ENCODE measurements at regions of chr17 and their contacts with region 1.

Region 1: GRCh38 chr17:68457539-68458259 is 403 bp upstream of the WIPI1 start:
- DNase-seq: peak; percentile 98
- ATAC-seq: peak; percentile 95
- H3K4me3 Mint-ChIP-seq: peak overlapping the region; percentile 77
- H3K27ac Mint-ChIP-seq: peak overlapping the region; percentile 88
- H3K4me1 Mint-ChIP-seq: peaks cover 82% of the 10 kb centered on the region
- H3K27me3 Mint-ChIP-seq: no peaks in the 10 kb centered on the region

Region 2: GRCh38 chr17:68172461-68172954 is 285.2 kb before region 1 on chr17:
- CTCF ChIA-PET with region 1: interaction called, 12 read pairs
- POLR2A ChIA-PET with region 1: no interaction called
- DNase-seq: peak; percentile 83
- ATAC-seq: peak; percentile 52
- H3K4me3 Mint-ChIP-seq: no peak overlapping the region
- H3K27ac Mint-ChIP-seq: no peak overlapping the region
- H3K4me1 Mint-ChIP-seq: peaks cover 42% of the 10 kb centered on the region
- H3K27me3 Mint-ChIP-seq: no peaks in the 10 kb centered on the region

Region 3: GRCh38 chr17:68184816-68185436 is 272.8 kb before region 1 on chr17:
- CTCF ChIA-PET with region 1: interaction called, 10 read pairs
- POLR2A ChIA-PET with region 1: interaction called, 4 read pairs
- DNase-seq: peak; percentile 78
- ATAC-seq: peak; percentile 76
- H3K4me3 Mint-ChIP-seq: peak overlapping the region; percentile 54
- H3K27ac Mint-ChIP-seq: peak overlapping the region; percentile 81
- H3K4me1 Mint-ChIP-seq: peaks cover 56% of the 10 kb centered on the region
- H3K27me3 Mint-ChIP-seq: peaks cover 2% of the 10 kb centered on the region

Region 4: DNA sequence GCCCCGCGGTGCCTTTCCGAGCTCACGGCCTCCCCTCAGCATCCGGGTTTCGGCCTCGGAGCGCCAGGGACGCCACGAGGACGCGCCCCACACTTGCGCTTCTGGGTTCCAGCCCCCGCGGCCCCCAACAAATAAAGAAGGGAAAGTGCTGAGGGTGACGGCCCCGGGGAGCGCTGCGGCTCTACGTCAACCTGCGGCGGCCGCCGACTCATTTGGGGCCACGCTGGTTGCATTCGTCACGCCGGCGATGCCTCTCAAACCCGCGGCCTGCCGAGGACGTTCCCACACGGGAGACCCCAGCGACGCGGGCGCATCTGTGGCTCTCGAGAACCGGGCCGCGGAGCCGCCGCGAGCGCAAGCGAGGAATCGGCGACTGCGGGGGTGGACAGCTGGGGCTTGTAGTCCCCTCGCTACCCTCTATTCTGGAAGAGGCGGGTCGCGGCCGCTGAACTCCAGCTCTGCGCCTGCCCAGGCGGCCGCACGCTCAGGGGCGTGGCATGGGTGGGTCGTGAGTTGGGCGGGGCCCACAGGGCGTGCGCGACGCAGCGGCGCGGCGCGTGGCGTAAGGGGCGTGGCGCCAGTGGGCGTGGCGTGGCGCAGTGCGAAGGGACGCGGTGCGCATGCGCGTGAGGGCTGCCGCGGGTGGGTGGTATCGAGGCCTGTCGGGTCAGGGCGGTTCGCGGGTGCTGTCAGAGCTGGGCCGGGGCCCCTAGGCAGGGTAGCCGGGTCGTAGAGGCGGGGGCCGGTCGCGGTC is 210.1 kb before region 1 on chr17 and contains the start of gene AMZ2:
- CTCF ChIA-PET with region 1: interaction called, 16 read pairs
- POLR2A ChIA-PET with region 1: interaction called, 31 read pairs
- DNase-seq: peak; percentile 96
- ATAC-seq: peak; percentile 89
- H3K4me3 Mint-ChIP-seq: peak within 1 kb of the TSS; percentile 81
- H3K27ac Mint-ChIP-seq: peak within 1 kb of the TSS; percentile 97
- H3K4me1 Mint-ChIP-seq: peaks cover 37% of the 10 kb centered on the region
- H3K27me3 Mint-ChIP-seq: no peaks in the 10 kb centered on the region
- total RNA-seq, gene AMZ2: 79.9 to 80.0 TPM

Region 5: GRCh38 chr17:68260051-68260762 is 197.5 kb before region 1 on chr17:
- CTCF ChIA-PET with region 1: interaction called, 66 read pairs
- POLR2A ChIA-PET with region 1: interaction called, 4 read pairs
- DNase-seq: no peak
- ATAC-seq: no peak
- H3K4me3 Mint-ChIP-seq: peak overlapping the region; percentile 8
- H3K27ac Mint-ChIP-seq: peak overlapping the region; percentile 89
- H3K4me1 Mint-ChIP-seq: peaks cover 75% of the 10 kb centered on the region
- H3K27me3 Mint-ChIP-seq: no peaks in the 10 kb centered on the region

Region 6: DNA sequence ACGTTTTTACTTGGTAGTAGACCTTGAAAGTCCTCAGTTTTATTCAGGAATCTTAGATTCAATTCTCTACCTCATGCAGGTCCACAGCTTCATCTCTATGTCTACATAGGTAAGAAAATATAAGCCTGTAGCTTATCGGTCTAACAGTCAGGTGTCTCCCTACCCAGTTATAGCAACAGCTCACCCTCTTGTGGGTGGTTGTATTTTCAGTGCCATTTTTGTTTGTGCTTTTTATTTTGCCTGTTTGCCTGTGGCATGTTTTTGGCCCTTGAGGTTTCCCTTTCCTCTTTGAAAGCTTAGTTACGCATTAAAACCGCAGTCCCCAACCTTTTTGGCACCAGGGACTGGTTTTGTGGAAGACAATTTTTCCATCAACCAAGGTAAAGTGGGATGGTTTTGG is 23.2 kb after region 1 on chr17:
- CTCF ChIA-PET with region 1: no interaction called
- POLR2A ChIA-PET with region 1: no interaction called
- DNase-seq: no peak
- ATAC-seq: no peak
- H3K4me3 Mint-ChIP-seq: no peak overlapping the region
- H3K27ac Mint-ChIP-seq: no peak overlapping the region
- H3K4me1 Mint-ChIP-seq: peaks cover 7% of the 10 kb centered on the region
- H3K27me3 Mint-ChIP-seq: peaks cover 39% of the 10 kb centered on the region

Measured in activated CD8-positive, alpha-beta T cell treated with anti-CD3 and anti-CD28 coated beads, Interleukin-2, amount 10 ng/mL, durations not matched to agents 7 days and 5 days (primary cell).